ENCODE measurements at regions of chr18 and their contacts with region 1.

Region 1: GRCh38 chr18:286515-287310 is 18.9 kb upstream of the THOC1 start:
- DNase-seq: no peak
- H3K4me3 ChIP-seq: no peak overlapping the region
- H3K27ac ChIP-seq: no peak overlapping the region
- H3K4me1 ChIP-seq: no peaks in the 10 kb centered on the region
- H3K27me3 ChIP-seq: no peaks in the 10 kb centered on the region
- CTCF ChIP-seq: peak in 3 of 6 experiments; percentile 35 to 45 (median 37)
- POLR2A ChIP-seq: no peak

Region 2: GRCh38 chr18:616380-616995 is 329.8 kb after region 1 on chr18:
- intact Hi-C with region 1: loop called (anchors 10 kb)
- DNase-seq: no peak
- H3K4me3 ChIP-seq: no peak overlapping the region
- H3K27ac ChIP-seq: no peak overlapping the region
- H3K4me1 ChIP-seq: no peaks in the 10 kb centered on the region
- H3K27me3 ChIP-seq: no peaks in the 10 kb centered on the region
- CTCF ChIP-seq: peak; percentile 16 to 61 (median 44)
- POLR2A ChIP-seq: no peak